SK-N-SH (cell line): ENCODE measurements at regions of chr16 and their contacts with region 1.

Region 1: DNA sequence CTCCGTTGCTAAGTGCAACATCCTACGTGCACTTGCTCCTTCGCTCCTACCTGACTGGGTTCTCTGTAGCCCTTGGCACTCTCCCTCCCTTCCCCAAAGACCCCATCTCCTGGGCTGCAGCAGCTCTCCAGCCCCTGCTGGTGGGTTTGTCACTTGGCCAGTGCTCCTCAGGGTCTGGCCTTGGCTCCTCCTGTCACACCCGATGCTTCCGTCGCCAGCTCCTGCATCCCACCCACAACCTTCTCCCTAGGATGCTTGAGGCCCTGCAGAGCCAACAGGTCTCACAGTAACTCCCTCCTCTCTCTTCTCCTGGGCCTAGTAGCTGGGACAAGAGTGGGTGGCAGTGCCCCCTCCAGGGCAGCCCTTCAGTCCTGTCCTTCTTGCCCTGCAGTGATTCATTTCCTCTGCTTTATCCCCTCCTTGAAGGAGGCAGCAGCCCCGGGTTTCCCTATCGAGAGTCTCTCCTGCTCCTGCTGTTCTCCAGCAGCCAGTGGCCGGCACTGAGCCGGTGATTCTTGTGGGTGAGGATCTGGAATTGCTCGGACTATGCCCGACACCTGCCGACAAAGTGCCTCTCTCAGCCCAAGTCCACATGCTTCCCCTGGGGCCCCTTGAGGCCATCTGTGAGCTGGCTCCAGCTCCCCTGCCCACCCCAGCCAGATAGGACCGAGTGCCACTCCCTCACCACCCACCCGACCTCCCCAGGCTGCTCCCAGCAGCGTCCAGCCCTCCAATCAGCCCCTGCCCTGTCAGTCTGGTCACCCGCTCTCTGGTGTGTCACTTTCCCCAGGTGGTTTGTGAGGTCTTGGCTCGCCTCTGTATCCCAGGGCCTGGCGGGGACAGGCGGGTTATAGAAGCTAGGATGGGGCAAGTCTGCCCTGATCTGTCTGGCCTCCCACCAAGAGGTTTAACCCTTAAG is 3.8 kb downstream of the LITAFD start:
- DNase-seq: peak; percentile 69
- H3K4me3 ChIP-seq: no peak overlapping the region
- H3K27ac ChIP-seq: peak overlapping the region; percentile 1 to 27; a peak in 2 of 4 replicates
- H3K4me1 ChIP-seq: peaks cover 9 to 32% of the 10 kb centered on the region in 2 experiments; a peak in 2 of 4 replicates
- H3K27me3 ChIP-seq: no peaks in the 10 kb centered on the region
- CTCF ChIP-seq: no peak
- EP300 ChIP-seq: no peak
- RAD21 ChIP-seq: no peak

Region 2: DNA sequence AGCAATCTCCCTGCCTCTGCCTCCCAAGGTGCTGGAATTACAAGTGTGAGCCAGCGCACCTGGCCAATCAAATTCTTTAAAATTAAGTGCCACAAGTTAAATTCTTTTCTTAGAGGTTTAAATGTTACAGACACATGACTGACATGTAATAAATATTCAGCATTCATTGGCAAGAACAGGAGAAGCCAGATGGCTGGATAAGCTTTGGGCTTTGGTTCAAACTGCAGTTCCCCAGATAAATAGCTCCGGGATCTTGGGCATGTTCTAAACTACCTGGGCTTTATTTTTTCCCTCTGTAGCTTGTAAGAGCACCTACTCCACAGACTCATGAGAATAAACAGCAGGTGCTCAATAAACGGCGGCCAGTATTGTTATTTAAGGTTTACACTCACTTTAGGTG is 177.4 kb before region 1 on chr16:
- CTCF ChIA-PET with region 1: no interaction called
- POLR2A ChIA-PET with region 1: no interaction called
- DNase-seq: no peak
- H3K4me3 ChIP-seq: no peak overlapping the region
- H3K27ac ChIP-seq: no peak overlapping the region
- H3K4me1 ChIP-seq: peaks cover 0 to 23% of the 10 kb centered on the region in 2 experiments; a peak in 3 of 4 replicates
- H3K27me3 ChIP-seq: no peaks in the 10 kb centered on the region
- CTCF ChIP-seq: no peak
- EP300 ChIP-seq: no peak
- RAD21 ChIP-seq: no peak

Region 3: DNA sequence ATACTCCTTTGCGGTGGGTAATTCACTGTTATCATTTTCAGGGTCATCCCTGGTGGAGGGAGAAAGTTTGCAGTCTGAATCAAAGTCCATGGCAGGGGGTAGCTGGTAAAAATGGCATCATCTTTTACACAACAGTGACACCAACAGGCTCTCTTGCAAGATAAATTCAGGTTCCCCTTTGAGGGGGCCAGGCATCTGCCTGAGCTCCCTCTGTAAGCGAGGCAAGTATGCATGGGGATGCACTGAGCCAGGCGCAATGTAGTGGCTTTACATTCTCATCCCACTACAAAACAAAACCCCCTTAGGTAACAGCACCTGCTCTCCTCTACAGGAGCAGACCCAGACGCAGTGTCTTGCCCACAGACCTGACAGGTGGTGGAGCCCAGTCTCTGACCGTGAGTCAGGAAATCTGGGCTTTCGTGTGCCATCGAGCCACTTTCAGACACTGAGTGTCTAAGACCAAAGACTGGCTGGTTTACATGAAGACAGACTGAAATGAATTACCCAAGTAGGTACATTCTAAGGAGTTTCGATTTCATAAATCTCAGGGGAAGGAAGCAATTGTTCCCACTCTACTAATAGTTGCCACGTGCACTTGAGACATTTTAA is 13.9 kb after region 1 on chr16:
- CTCF ChIA-PET with region 1: interaction called, 14 read pairs
- POLR2A ChIA-PET with region 1: interaction called, 4 read pairs
- DNase-seq: no peak
- H3K4me3 ChIP-seq: no peak overlapping the region
- H3K27ac ChIP-seq: no peak overlapping the region
- H3K4me1 ChIP-seq: no peaks in the 10 kb centered on the region
- H3K27me3 ChIP-seq: no peaks in the 10 kb centered on the region
- CTCF ChIP-seq: no peak
- EP300 ChIP-seq: no peak
- RAD21 ChIP-seq: peak; percentile 1; the same call in 1 of the 2 replicates